ENCODE measurements at regions of chr3 and their contacts with region 1.

Region 1: DNA sequence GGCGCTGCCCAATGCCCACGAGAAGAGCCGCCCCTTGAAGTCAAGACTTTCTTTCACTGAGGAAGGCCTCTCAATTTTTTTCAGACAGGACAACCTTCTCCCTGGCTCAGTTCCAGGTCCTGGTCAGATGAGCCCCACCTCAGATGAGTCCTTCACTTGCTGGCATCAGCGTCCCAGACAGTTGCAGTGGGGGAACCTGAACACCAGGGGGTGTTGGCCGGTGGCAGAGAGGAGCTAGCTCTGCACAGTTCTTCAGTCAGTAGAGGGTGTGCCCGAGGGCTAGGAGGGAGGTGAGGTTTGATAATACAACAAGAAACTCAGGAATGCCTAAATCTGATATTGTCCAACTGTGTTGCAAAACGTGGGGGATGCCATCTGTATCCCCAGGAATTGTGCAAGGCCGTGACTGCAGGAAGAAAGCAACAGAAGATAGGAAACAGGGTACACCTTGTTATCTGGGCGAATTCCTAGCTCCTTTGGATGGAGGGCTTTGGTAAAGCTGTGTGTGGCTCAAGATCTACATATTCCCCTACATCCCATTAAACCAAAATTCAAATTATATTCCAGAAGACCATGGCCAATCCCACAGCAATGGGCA is 34.3 kb downstream of the CCR3 start:
- DNase-seq: peak; percentile 79
- ATAC-seq: peak; percentile 93
- H3K4me3 ChIP-seq: no peak overlapping the region
- H3K4me3 Mint-ChIP-seq: no peak overlapping the region
- H3K27ac ChIP-seq: no peak overlapping the region
- H3K27ac Mint-ChIP-seq: no peak overlapping the region
- H3K4me1 ChIP-seq: peaks cover 5 to 7% of the 10 kb centered on the region in 2 donors
- H3K4me1 Mint-ChIP-seq: peaks cover 11% of the 10 kb centered on the region
- H3K27me3 ChIP-seq: no peaks in the 10 kb centered on the region
- H3K27me3 Mint-ChIP-seq: no peaks in the 10 kb centered on the region
- CTCF ChIP-seq: peak; percentile 89

Region 2: GRCh38 chr3:45760878-45761711 is 515.5 kb before region 1 on chr3:
- CTCF ChIA-PET with region 1: no interaction called
- POLR2A ChIA-PET with region 1: no interaction called
- intact Hi-C with region 1: no loop called
- DNase-seq: peak; percentile 63
- ATAC-seq: peak; percentile 58
- H3K4me3 ChIP-seq: no peak overlapping the region
- H3K4me3 Mint-ChIP-seq: no peak overlapping the region
- H3K27ac ChIP-seq: no peak overlapping the region
- H3K27ac Mint-ChIP-seq: no peak overlapping the region
- H3K4me1 ChIP-seq: peaks cover 0 to 5% of the 10 kb centered on the region in 2 donors
- H3K4me1 Mint-ChIP-seq: peaks cover 2% of the 10 kb centered on the region
- H3K27me3 ChIP-seq: peaks cover 0 to 2% (median 0%) of the 10 kb centered on the region in 4 experiments
- H3K27me3 Mint-ChIP-seq: peaks cover 13% of the 10 kb centered on the region
- CTCF ChIP-seq: peak; percentile 66

Region 3: DNA sequence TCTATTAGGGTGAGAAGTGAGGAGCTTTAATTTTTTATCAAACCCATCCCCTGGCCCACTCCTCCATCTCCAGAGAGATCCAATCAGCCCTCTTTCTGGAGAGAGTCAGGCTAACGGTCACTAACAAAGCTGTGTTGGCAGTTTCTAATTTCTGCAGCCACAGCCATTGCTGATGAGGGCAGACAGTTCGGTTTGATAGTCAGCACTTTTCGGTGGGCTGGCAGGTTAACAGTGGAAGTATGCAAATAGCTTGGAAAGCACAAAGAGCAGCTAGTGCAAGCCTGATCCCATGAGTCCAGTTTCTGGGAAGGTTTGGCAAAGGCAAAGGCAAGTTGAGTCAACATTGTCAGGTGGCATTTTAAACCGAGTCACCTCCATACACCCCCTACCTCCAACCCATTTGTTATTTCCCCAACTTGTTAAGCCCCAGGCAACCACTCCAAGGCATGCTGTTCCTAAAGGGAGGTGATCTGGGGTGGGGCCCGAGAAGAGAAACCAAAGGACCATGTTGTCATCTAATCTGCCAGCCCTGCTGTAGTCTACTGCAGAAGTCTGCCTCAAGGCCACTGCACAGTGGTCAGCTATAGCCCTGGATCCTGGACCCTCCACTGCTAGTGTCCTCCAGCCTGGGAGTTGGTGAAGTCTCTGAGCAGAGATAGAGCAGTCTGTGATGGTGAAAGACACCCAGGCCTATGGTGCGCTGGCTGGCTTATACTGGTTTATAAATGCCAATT is 70.2 kb before region 1 on chr3:
- CTCF ChIA-PET with region 1: no interaction called
- POLR2A ChIA-PET with region 1: no interaction called
- intact Hi-C with region 1: no loop called
- DNase-seq: no peak
- ATAC-seq: no peak
- H3K4me3 ChIP-seq: peak overlapping the region in 1 of 5 experiments; percentile 19
- H3K4me3 Mint-ChIP-seq: peak overlapping the region; percentile 40
- H3K27ac ChIP-seq: no peak overlapping the region
- H3K27ac Mint-ChIP-seq: peak overlapping the region; percentile 59
- H3K4me1 ChIP-seq: peaks cover 21 to 34% of the 10 kb centered on the region in 2 donors
- H3K4me1 Mint-ChIP-seq: peaks cover 45% of the 10 kb centered on the region
- H3K27me3 ChIP-seq: no peaks in the 10 kb centered on the region
- H3K27me3 Mint-ChIP-seq: no peaks in the 10 kb centered on the region
- CTCF ChIP-seq: no peak

Region 4: GRCh38 chr3:46266598-46266997 is 10.0 kb before region 1 on chr3:
- CTCF ChIA-PET with region 1: interaction called, 17 read pairs
- POLR2A ChIA-PET with region 1: no interaction called
- intact Hi-C with region 1: no loop called
- DNase-seq: no peak
- ATAC-seq: no peak
- H3K4me3 ChIP-seq: no peak overlapping the region
- H3K4me3 Mint-ChIP-seq: no peak overlapping the region
- H3K27ac ChIP-seq: no peak overlapping the region
- H3K27ac Mint-ChIP-seq: no peak overlapping the region
- H3K4me1 ChIP-seq: no peaks in the 10 kb centered on the region
- H3K4me1 Mint-ChIP-seq: no peaks in the 10 kb centered on the region
- H3K27me3 ChIP-seq: peaks cover 0 to 5% (median 0%) of the 10 kb centered on the region in 4 experiments
- H3K27me3 Mint-ChIP-seq: peaks cover 25% of the 10 kb centered on the region
- CTCF ChIP-seq: no peak

Region 5: GRCh38 chr3:46378426-46378942 is 101.9 kb after region 1 on chr3:
- CTCF ChIA-PET with region 1: interaction called, 160 read pairs
- POLR2A ChIA-PET with region 1: no interaction called
- intact Hi-C with region 1: loop called (anchors 1 kb)
- DNase-seq: peak; percentile 64
- ATAC-seq: peak; percentile 51
- H3K4me3 ChIP-seq: no peak overlapping the region
- H3K4me3 Mint-ChIP-seq: no peak overlapping the region
- H3K27ac ChIP-seq: no peak overlapping the region
- H3K27ac Mint-ChIP-seq: peak overlapping the region; percentile 5
- H3K4me1 ChIP-seq: peaks cover 24 to 30% of the 10 kb centered on the region in 2 donors
- H3K4me1 Mint-ChIP-seq: peaks cover 41% of the 10 kb centered on the region
- H3K27me3 ChIP-seq: peaks cover 0 to 2% (median 0%) of the 10 kb centered on the region in 4 experiments
- H3K27me3 Mint-ChIP-seq: peaks cover 3% of the 10 kb centered on the region
- CTCF ChIP-seq: peak; percentile 72

Region 6: GRCh38 chr3:46427916-46428833 is 151.6 kb after region 1 on chr3:
- CTCF ChIA-PET with region 1: interaction called, 10 read pairs
- POLR2A ChIA-PET with region 1: no interaction called
- intact Hi-C with region 1: loop called (anchors 5 kb)
- DNase-seq: no peak
- ATAC-seq: no peak
- H3K4me3 ChIP-seq: no peak overlapping the region
- H3K4me3 Mint-ChIP-seq: no peak overlapping the region
- H3K27ac ChIP-seq: no peak overlapping the region
- H3K27ac Mint-ChIP-seq: no peak overlapping the region
- H3K4me1 ChIP-seq: no peaks in the 10 kb centered on the region
- H3K4me1 Mint-ChIP-seq: no peaks in the 10 kb centered on the region
- H3K27me3 ChIP-seq: no peaks in the 10 kb centered on the region
- H3K27me3 Mint-ChIP-seq: no peaks in the 10 kb centered on the region
- CTCF ChIP-seq: no peak

Region 7: GRCh38 chr3:46442576-46443562 is 166.3 kb after region 1 on chr3:
- CTCF ChIA-PET with region 1: interaction called, 5 read pairs
- POLR2A ChIA-PET with region 1: no interaction called
- intact Hi-C with region 1: loop called (anchors 5 kb)
- DNase-seq: peak; percentile 58
- ATAC-seq: no peak
- H3K4me3 ChIP-seq: no peak overlapping the region
- H3K4me3 Mint-ChIP-seq: no peak overlapping the region
- H3K27ac ChIP-seq: no peak overlapping the region
- H3K27ac Mint-ChIP-seq: no peak overlapping the region
- H3K4me1 ChIP-seq: peaks cover 32 to 33% of the 10 kb centered on the region in 2 donors
- H3K4me1 Mint-ChIP-seq: peaks cover 34% of the 10 kb centered on the region
- H3K27me3 ChIP-seq: no peaks in the 10 kb centered on the region
- H3K27me3 Mint-ChIP-seq: peaks cover 4% of the 10 kb centered on the region
- CTCF ChIP-seq: peak; percentile 72

Region 8: GRCh38 chr3:46558184-46559043 is 281.8 kb after region 1 on chr3:
- CTCF ChIA-PET with region 1: interaction called, 3 read pairs
- POLR2A ChIA-PET with region 1: no interaction called
- intact Hi-C with region 1: loop called (anchors 1 kb)
- DNase-seq: peak; percentile 88
- ATAC-seq: peak; percentile 99
- H3K4me3 ChIP-seq: peak overlapping the region in 3 of 5 experiments; percentile 27 to 37 (median 37)
- H3K4me3 Mint-ChIP-seq: peak overlapping the region; percentile 74
- H3K27ac ChIP-seq: no peak overlapping the region
- H3K27ac Mint-ChIP-seq: peak overlapping the region; percentile 21
- H3K4me1 ChIP-seq: peaks cover 13% of the 10 kb centered on the region in 2 donors
- H3K4me1 Mint-ChIP-seq: peaks cover 14% of the 10 kb centered on the region
- H3K27me3 ChIP-seq: no peaks in the 10 kb centered on the region
- H3K27me3 Mint-ChIP-seq: peaks cover 6% of the 10 kb centered on the region
- CTCF ChIP-seq: peak; percentile 85

Measured in B cell (primary cell).